ENCODE measurements at regions of chr13 and their contacts with region 1.

Region 1: DNA sequence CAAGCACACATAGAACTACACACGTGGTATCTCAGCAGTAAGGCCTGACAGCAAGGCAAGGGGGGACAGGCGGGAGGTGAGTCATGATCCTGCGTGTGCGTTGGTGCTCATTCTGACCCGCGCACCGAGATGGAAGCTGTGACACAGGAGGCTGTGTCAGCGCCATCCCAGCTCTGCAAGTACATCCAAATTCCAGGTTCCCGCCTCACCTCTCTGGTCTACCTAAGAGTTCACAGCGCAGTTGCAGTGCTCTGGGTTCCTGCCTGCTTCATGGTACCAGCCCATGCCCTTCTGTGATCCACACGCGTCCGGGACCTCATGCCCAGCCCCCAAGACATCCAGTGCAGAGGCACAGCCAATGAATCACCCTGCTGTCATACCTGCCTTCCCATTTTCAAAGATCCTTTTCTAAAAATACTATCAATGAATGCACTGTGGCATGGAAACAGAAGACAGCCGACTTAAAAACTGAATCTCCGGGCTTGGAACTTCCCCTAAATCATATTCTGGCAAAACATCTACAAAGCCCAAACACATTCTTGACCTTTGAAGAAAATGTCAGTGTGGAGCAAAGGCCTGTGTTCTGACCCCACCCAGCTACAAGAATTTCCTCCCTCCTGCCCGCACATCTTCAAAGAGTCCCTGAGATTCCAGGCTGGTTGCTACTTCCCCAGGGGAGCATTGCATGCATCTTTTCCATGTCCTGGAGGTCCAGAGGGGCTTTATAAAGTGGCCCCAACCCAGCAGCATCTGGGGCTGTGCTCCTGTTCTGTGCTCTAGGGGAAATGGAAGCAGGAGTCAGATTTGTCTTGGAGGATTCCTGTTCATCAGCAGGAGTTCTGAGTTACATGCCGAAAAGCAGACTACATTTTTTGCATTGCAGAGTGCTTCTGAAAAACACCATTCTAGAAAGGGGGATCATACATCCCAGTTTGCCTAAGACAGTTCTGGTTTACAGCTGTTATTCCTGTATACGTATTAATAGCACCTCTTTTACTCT is 135.3 kb downstream of the USP12 start:
- DNase-seq: no peak
- H3K4me3 ChIP-seq: no peak overlapping the region
- H3K27ac ChIP-seq: peak overlapping the region; percentile 76 to 90 (median 89)
- H3K4me1 ChIP-seq: peaks cover 0 to 63% (median 57%) of the 10 kb centered on the region in 4 donors
- H3K27me3 ChIP-seq: no peaks in the 10 kb centered on the region
- CTCF ChIP-seq: no peak
- EP300 ChIP-seq: peak in 1 of 4 donors; percentile 34
- POLR2A ChIP-seq: no peak

Region 2: DNA sequence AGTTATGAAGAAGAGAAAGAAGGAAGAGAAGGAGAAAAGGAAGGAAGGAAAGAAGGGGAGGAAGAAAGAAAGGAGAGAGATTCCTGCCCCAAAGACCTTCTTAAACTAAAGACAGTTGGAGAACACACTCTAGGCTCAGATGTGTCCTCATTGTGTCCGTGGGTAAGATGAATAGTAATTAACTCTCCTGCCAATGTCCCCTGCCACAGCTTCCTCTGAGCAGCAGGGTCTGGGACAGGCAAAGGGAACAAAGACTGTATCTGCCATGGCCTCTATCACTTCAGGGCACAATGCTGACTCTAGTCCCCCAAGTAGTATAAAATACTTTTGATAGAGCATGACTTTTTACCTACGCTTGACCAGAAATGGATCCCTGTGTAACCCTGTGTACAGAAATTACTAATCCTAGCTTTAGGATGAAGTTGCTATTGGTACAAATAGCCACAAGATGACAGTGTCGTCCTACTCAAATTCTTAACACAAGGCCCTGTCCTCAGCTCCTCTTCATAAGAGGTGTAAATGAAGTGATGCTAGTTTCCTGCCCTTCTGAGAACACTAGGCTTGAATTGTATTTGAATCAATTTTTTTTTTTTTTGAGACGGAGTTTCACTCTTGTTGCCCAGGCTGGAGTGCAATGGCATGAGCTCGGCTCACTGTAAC is 89.5 kb before region 1 on chr13:
- intact Hi-C with region 1: no loop called
- DNase-seq: no peak
- H3K4me3 ChIP-seq: no peak overlapping the region
- H3K27ac ChIP-seq: no peak overlapping the region
- H3K4me1 ChIP-seq: peaks cover 0 to under 1% (median 0%) of the 10 kb centered on the region in 4 donors
- H3K27me3 ChIP-seq: peaks cover 0 to 7% (median 0%) of the 10 kb centered on the region in 3 donors
- CTCF ChIP-seq: peak; percentile 86 to 91 (median 90)
- EP300 ChIP-seq: no peak
- POLR2A ChIP-seq: no peak

Region 3: GRCh38 chr13:26991508-26992181 is 44.6 kb before region 1 on chr13:
- intact Hi-C with region 1: loop called (anchors 5 kb)
- DNase-seq: peak; percentile 72
- H3K4me3 ChIP-seq: no peak overlapping the region
- H3K27ac ChIP-seq: peak overlapping the region; percentile 74 to 83 (median 78)
- H3K4me1 ChIP-seq: peaks cover 0 to 70% (median 64%) of the 10 kb centered on the region in 4 donors
- H3K27me3 ChIP-seq: no peaks in the 10 kb centered on the region
- CTCF ChIP-seq: no peak
- EP300 ChIP-seq: no peak
- POLR2A ChIP-seq: no peak

Region 4: GRCh38 chr13:27171827-27172494 is 135.7 kb after region 1 on chr13:
- intact Hi-C with region 1: loop called (anchors 5 kb)
- DNase-seq: peak; percentile 96
- H3K4me3 ChIP-seq: peak overlapping the region; percentile 71 to 95 (median 92)
- H3K27ac ChIP-seq: peak overlapping the region; percentile 96 to 99 (median 98)
- H3K4me1 ChIP-seq: peaks cover 0 to 43% (median 39%) of the 10 kb centered on the region in 4 donors
- H3K27me3 ChIP-seq: no peaks in the 10 kb centered on the region
- CTCF ChIP-seq: no peak
- EP300 ChIP-seq: no peak
- POLR2A ChIP-seq: no peak

Region 5: GRCh38 chr13:27194895-27195764 is 158.8 kb after region 1 on chr13:
- intact Hi-C with region 1: no loop called
- DNase-seq: no peak
- H3K4me3 ChIP-seq: no peak overlapping the region
- H3K27ac ChIP-seq: peak overlapping the region in 1 of 4 donors; percentile 30
- H3K4me1 ChIP-seq: peaks cover 0 to 8% (median 4%) of the 10 kb centered on the region in 4 donors
- H3K27me3 ChIP-seq: no peaks in the 10 kb centered on the region
- CTCF ChIP-seq: no peak
- EP300 ChIP-seq: no peak
- POLR2A ChIP-seq: no peak

Region 6: DNA sequence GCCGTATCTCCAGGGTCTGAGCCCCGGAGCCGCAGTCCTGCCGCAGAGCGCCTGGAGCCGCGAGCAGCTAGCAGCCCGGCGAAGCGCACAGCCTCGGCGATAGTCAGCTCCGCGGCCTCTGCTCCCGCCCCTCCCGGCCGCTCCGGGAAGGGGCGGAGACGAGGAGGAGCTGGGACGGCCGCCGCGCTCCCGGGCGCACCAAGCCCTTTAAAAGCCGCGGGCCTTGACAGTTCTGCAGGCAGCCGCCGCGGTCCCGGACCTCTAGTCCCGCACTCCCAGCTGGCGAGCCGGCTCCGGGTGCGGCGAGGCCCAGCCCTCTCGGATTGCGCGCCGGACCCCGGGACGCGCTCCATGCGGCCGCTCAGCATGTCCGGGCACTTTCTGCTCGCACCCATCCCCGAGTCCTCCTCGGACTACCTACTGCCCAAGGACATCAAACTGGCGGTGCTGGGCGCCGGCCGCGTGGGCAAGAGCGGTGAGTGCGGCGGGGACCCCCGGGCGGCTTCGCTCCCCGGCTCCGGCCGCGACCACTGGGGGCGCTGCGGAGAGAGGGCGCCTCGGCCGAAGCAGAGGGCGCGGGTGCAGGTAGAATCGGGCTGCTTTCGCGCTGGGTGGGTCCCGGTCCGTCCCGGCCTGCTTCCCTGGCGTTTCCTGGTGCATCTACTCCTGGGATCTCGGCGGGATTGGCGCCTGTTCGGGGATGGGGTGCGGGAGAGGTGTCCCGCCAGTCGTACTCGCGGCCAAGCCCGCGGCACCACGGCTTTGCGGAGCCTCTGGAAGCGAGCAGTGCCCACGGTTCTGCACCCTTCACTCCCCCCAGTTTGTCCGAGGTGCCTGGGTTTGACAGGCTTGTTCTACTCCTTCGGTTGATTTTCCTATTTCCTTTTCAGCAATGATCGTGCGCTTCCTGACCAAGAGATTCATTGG is 234.6 kb after region 1 on chr13 and contains the start of gene RASL11A:
- intact Hi-C with region 1: loop called (anchors 5 kb)
- DNase-seq: peak; percentile 95
- H3K4me3 ChIP-seq: peak within 1 kb of the TSS; percentile 73 to 85 (median 79)
- H3K27ac ChIP-seq: peak within 1 kb of the TSS; percentile 92 to 96 (median 96)
- H3K4me1 ChIP-seq: peaks cover 0 to 41% (median 34%) of the 10 kb centered on the region in 4 donors
- H3K27me3 ChIP-seq: no peaks in the 10 kb centered on the region
- CTCF ChIP-seq: peak; percentile 77 to 99 (median 86)
- EP300 ChIP-seq: no peak
- POLR2A ChIP-seq: peak; percentile 61 to 69
- total RNA-seq, gene RASL11A: 14.1 to 123 (median 18.4) TPM